A673 (cell line): ENCODE measurements at regions of chr3 and their contacts with region 1.

Region 1: DNA sequence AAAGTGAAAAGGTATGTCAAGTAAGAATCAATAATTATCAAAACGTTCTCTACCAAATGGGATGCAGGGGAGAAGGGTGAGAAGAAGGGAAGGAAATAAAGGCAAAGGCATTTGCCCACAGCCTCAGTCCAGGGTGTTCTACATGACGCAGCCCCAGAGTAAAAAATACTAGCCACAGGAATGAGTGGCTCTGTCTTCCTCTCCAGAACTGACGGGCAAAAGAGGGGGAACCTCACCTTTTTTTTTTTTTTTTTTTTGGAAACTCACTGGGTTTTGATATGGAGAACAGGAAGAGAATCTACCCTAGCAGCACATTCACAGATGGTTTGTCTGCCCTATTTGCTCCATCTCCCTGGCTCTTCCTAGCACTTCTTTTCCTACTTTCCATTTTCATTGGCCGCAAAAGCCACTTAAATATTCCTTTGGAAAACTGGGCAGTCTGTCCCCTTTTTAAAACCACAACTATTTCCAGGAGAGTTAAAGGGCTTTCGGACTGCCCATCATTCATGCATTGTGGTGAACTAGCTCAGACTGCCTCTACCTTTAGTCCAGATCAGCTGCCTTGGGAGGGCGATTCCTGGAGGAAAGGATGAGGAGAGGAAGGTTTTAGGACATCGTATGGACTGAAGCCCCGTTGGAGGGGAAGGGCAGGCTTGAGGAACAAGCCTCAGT is 28.2 kb downstream of the B3GNT5 start:
- DNase-seq: no peak
- H3K4me3 ChIP-seq: no peak overlapping the region
- H3K27ac ChIP-seq: no peak overlapping the region
- H3K4me1 ChIP-seq: peaks cover 11% of the 10 kb centered on the region
- H3K27me3 ChIP-seq: no peaks in the 10 kb centered on the region
- CTCF ChIP-seq: no peak

Region 2: GRCh38 chr3:183227586-183227985 is 53.7 kb before region 1 on chr3:
- CTCF ChIA-PET with region 1: no interaction called
- POLR2A ChIA-PET with region 1: interaction called, 13 read pairs
- intact Hi-C with region 1: no loop called
- DNase-seq: no peak
- H3K4me3 ChIP-seq: no peak overlapping the region
- H3K27ac ChIP-seq: no peak overlapping the region
- H3K4me1 ChIP-seq: no peaks in the 10 kb centered on the region
- H3K27me3 ChIP-seq: no peaks in the 10 kb centered on the region
- CTCF ChIP-seq: no peak

Region 3: GRCh38 chr3:183330881-183331280 is 49.6 kb after region 1 on chr3:
- CTCF ChIA-PET with region 1: no interaction called
- POLR2A ChIA-PET with region 1: no interaction called
- intact Hi-C with region 1: no loop called
- DNase-seq: no peak
- H3K4me3 ChIP-seq: no peak overlapping the region
- H3K27ac ChIP-seq: no peak overlapping the region
- H3K4me1 ChIP-seq: no peaks in the 10 kb centered on the region
- H3K27me3 ChIP-seq: no peaks in the 10 kb centered on the region
- CTCF ChIP-seq: no peak